HepG2 (cell line): ENCODE measurements at regions of chr3 and their contacts with region 1.

Region 1: GRCh38 chr3:144687855-144688254 is 716.2 kb downstream of the DIPK2A start:
- DNase-seq: peak; percentile 46
- ATAC-seq: peak; percentile 89
- H3K4me3 ChIP-seq: no peak overlapping the region
- H3K27ac ChIP-seq: no peak overlapping the region
- H3K4me1 ChIP-seq: no peaks in the 10 kb centered on the region
- H3K27me3 ChIP-seq: no peaks in the 10 kb centered on the region
- CTCF ChIP-seq: peak; percentile 72
- EP300 ChIP-seq: no peak
- POLR2A ChIP-seq: no peak
- RAD21 ChIP-seq: no peak

Region 2: GRCh38 chr3:145767909-145768308 is 1080.1 kb after region 1 on chr3:
- CTCF ChIA-PET with region 1: no interaction called
- POLR2A ChIA-PET with region 1: no interaction called
- in situ Hi-C with region 1: loop called (anchors 25 kb)
- intact Hi-C with region 1: no loop called
- DNase-seq: no peak
- ATAC-seq: no peak
- H3K4me3 ChIP-seq: no peak overlapping the region
- H3K27ac ChIP-seq: no peak overlapping the region
- H3K4me1 ChIP-seq: no peaks in the 10 kb centered on the region
- H3K27me3 ChIP-seq: no peaks in the 10 kb centered on the region
- CTCF ChIP-seq: no peak
- EP300 ChIP-seq: no peak
- POLR2A ChIP-seq: no peak
- RAD21 ChIP-seq: no peak